ENCODE measurements at regions of chr17 and their contacts with region 1.

Region 1: GRCh38 chr17:57084802-57085447 is at the start of gene AKAP1:
- DNase-seq: peak; percentile 90 to 95
- ATAC-seq: peak; percentile 77 to 78
- H3K4me3 ChIP-seq: peak within 1 kb of the TSS; percentile 75 to 95 (median 82)
- H3K27ac ChIP-seq: peak within 1 kb of the TSS; percentile 91 to 99 (median 94)
- H3K4me1 ChIP-seq: peaks cover 41% of the 10 kb centered on the region in 2 donors
- H3K27me3 ChIP-seq: no peaks in the 10 kb centered on the region
- CTCF ChIP-seq: peak in 4 of 5 experiments; percentile 24 to 50 (median 32)
- POLR2A ChIP-seq: peak; percentile 96 to 98
- total RNA-seq, gene AKAP1: 57.5 to 174 (median 117) TPM

Region 2: GRCh38 chr17:56977673-56978395 is 107.1 kb before region 1 on chr17 and contains the start of gene SCPEP1:
- in situ Hi-C with region 1: no loop called
- intact Hi-C with region 1: loop called (anchors 10 kb)
- DNase-seq: peak; percentile 86 to 87
- ATAC-seq: peak; percentile 89 to 92
- H3K4me3 ChIP-seq: peak within 1 kb of the TSS; percentile 65 to 79 (median 75)
- H3K27ac ChIP-seq: peak within 1 kb of the TSS; percentile 67 to 84 (median 76)
- H3K4me1 ChIP-seq: peaks cover 12% of the 10 kb centered on the region in 2 donors
- H3K27me3 ChIP-seq: no peaks in the 10 kb centered on the region
- CTCF ChIP-seq: no peak
- POLR2A ChIP-seq: peak; percentile 47 to 65
- total RNA-seq, gene SCPEP1: 9.9 to 44.7 (median 30.2) TPM

Region 3: GRCh38 chr17:57106107-57106835 is 21.3 kb after region 1 on chr17:
- in situ Hi-C with region 1: no loop called
- intact Hi-C with region 1: loop called (anchors 2 kb)
- DNase-seq: peak; percentile 65 to 94
- ATAC-seq: peak; percentile 43 to 57
- H3K4me3 ChIP-seq: no peak overlapping the region
- H3K27ac ChIP-seq: peak overlapping the region; percentile 93 to 99 (median 95)
- H3K4me1 ChIP-seq: peaks cover 62 to 77% of the 10 kb centered on the region in 2 donors
- H3K27me3 ChIP-seq: no peaks in the 10 kb centered on the region
- CTCF ChIP-seq: peak; percentile 26 to 59 (median 53)
- POLR2A ChIP-seq: no peak

Region 4: DNA sequence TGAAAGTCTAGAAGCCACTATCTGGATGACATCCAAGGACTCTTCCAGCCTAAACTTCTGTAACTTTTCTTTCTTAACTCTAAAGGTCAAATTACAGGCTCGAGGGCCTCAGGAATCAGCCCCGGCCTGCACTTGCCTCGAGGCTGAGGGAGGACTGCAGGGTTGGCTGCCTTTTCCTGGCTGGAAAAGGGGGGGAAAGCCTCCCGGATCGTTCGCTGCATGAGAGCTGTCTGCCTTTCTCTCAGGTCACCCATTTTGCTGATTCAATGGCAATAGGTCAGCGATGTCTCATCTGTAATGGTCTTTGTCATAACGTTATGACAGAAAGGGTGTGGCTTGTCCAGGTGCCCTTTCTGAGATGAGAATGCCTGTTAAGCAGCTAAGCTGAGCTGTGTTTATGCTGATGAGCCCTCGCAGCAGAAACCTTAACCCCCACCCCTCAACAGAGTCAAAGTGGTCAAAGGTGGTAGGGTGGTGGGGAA is 81.8 kb after region 1 on chr17:
- in situ Hi-C with region 1: no loop called
- intact Hi-C with region 1: no loop called
- DNase-seq: no peak
- ATAC-seq: no peak
- H3K4me3 ChIP-seq: no peak overlapping the region
- H3K27ac ChIP-seq: no peak overlapping the region
- H3K4me1 ChIP-seq: no peaks in the 10 kb centered on the region
- H3K27me3 ChIP-seq: no peaks in the 10 kb centered on the region
- CTCF ChIP-seq: no peak
- POLR2A ChIP-seq: no peak

Region 5: GRCh38 chr17:57284984-57285646 is 200.2 kb after region 1 on chr17:
- in situ Hi-C with region 1: no loop called
- intact Hi-C with region 1: no loop called
- DNase-seq: no peak
- ATAC-seq: no peak
- H3K4me3 ChIP-seq: no peak overlapping the region
- H3K27ac ChIP-seq: peak overlapping the region; percentile 85 to 92 (median 88)
- H3K4me1 ChIP-seq: peaks cover 86 to 88% of the 10 kb centered on the region in 2 donors
- H3K27me3 ChIP-seq: no peaks in the 10 kb centered on the region
- CTCF ChIP-seq: no peak
- POLR2A ChIP-seq: no peak

Region 6: DNA sequence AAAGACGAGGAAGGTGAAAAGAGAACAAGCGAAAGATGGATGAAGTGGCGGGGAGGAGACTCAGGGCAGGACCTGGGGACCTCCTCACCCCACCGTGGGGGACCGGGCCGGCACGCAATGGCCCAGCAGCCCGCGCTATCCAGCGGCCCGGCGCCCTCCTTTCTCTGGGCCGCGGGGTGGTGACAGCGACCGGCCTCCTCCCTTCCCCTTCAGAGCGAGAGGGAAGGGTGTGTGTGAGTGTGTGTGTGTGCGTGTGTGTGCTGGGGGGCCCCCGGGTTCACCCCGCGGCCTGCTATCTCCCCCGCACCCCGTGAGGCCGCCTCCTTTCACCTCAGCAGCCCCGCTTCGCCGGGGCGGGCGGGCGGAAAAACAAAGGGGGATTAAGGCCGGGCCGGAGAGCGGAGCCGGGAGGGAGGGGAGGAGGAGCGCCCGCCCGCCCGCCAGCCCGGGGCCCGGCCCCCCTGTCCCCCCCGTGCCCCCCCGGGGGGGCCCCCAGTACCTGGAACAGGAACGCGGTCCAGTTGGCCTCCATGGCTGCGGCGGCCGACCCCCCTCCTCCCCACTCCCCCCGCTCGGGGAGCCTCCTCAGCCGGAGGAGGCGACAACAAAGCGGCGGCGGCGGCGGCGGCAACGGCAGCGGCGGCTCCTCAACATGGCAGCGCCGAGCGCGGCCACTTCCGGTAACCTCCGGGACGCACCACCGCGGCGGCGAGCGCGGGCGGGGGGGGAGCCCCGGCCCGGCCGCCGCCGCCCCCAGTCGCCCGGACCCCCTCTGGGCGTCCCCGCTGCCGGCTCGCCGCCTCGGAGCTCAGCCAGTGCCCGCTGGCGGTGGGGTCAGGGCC is 902.9 kb after region 1 on chr17 and contains the start of gene VEZF1:
- in situ Hi-C with region 1: loop called in 1 of 4 experiments (anchors 25 kb)
- intact Hi-C with region 1: loop called (anchors 5 kb)
- DNase-seq: peak; percentile 56 to 75
- ATAC-seq: peak; percentile 62 to 67
- H3K4me3 ChIP-seq: peak within 1 kb of the TSS; percentile 67 to 92 (median 81)
- H3K27ac ChIP-seq: peak within 1 kb of the TSS; percentile 95 to 99 (median 98)
- H3K4me1 ChIP-seq: peaks cover 72 to 83% of the 10 kb centered on the region in 2 donors
- H3K27me3 ChIP-seq: no peaks in the 10 kb centered on the region
- CTCF ChIP-seq: no peak
- POLR2A ChIP-seq: peak; percentile 67 to 87
- total RNA-seq, gene VEZF1: 99.9 to 137 (median 106) TPM

Region 7: DNA sequence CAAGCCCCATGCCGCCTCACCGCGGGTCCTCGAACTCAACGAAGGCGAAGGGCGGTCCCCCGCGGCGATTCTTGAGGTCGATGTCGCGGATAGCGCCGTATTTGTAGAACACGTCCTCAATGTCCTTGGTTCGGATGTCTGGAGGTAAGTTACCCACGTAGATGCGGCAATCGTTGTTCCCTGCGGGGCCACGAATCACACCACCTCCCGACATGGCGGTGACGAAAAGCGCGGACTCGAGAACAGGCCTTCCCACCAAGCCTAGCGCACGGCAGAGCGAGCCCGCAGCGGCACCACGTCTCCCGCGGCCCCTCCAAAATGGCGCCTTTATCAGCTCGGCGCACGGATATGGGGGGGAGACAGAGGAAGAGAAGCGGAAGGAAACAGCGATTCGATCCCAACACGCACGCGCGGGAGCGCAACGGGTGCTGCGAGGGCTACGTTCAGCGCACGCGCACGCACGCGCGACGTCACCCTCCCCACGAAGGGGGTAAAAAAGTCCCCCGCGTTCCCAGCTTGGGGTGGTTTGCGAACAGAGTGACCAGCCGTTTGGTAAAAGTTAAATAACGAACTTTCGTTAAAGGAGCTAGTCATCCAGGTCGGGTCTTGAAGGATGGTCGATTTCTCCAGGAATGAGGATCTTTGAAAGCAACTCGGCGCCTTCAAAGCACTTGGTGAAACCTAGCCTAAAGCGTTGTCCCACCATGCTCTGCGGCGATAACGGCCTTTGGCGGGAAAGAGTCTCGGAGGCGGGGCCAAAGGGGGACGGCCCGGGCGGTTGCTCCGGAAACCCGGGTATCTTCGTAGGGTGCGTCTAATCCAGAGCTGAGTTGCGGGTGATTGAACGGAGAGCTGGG is 922.2 kb after region 1 on chr17 and contains the start of gene SRSF1:
- in situ Hi-C with region 1: no loop called
- intact Hi-C with region 1: loop called (anchors 1 kb)
- DNase-seq: peak; percentile 95 to 96
- ATAC-seq: peak; percentile 90 to 93
- H3K4me3 ChIP-seq: peak within 1 kb of the TSS; percentile 91 to 98 (median 97)
- H3K27ac ChIP-seq: peak within 1 kb of the TSS; percentile 96 to 100 (median 100)
- H3K4me1 ChIP-seq: peaks cover 47 to 48% of the 10 kb centered on the region in 2 donors
- H3K27me3 ChIP-seq: no peaks in the 10 kb centered on the region
- CTCF ChIP-seq: peak in 1 of 5 experiments; percentile 25
- POLR2A ChIP-seq: peak; percentile 97 to 98
- total RNA-seq, gene SRSF1: 69.4 to 85.4 (median 82.2) TPM

Measured in gastrocnemius medialis (tissue), 4 donors.